MCF 10A (cell line): ENCODE measurements at regions of chr20 and their contacts with region 1.

Region 1: DNA sequence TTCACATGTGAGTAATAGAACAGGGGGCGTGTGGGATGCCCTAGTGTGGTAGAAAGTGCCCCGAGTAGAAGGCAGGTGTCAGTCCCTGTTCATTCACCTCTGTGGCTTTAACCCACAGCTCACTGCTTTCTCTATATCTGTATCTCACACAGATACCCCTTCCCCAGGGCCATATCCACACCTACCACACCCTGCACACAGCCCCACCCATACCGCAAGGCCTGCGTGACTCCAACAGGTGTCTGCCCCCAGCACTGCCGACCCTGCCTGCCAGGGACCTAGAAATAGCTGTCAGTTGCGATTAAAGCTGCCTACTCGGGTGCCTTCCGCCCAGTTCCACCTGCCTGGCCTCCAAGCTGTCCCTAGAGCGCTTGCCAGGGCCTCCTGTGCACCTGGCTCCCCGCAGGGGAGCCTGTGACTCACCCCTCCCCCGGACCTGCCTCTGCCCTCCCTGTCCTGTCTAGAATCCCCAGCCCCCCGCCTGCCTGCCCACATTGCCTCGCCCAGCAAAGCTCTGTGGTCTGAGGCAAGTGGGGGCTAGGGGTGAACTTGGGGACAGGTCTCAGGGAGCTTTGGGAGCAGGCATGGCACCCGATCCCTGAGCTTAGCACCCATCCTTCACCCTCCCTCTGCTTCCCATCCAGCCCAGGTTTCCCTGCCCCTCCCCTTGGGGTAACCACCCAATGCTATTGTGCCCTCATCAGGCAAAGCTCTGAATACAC is 38.3 kb upstream of the ID1 start:
- DNase-seq: peak; percentile 88
- H3K4me3 Mint-ChIP-seq: no peak overlapping the region
- H3K27ac Mint-ChIP-seq: peak overlapping the region; percentile 42
- H3K4me1 Mint-ChIP-seq: peaks cover 37% of the 10 kb centered on the region
- H3K27me3 Mint-ChIP-seq: no peaks in the 10 kb centered on the region
- CTCF ChIP-seq: no peak

Region 2: GRCh38 chr20:31355981-31356380 is 210.8 kb before region 1 on chr20:
- CTCF ChIA-PET with region 1: no interaction called
- POLR2A ChIA-PET with region 1: no interaction called
- intact Hi-C with region 1: no loop called
- DNase-seq: no peak
- H3K4me3 Mint-ChIP-seq: no peak overlapping the region
- H3K27ac Mint-ChIP-seq: no peak overlapping the region
- H3K4me1 Mint-ChIP-seq: no peaks in the 10 kb centered on the region
- H3K27me3 Mint-ChIP-seq: peaks cover 16% of the 10 kb centered on the region
- CTCF ChIP-seq: no peak

Region 3: GRCh38 chr20:31368301-31368700 is 198.5 kb before region 1 on chr20 and contains the start of gene DEFB118:
- CTCF ChIA-PET with region 1: no interaction called
- POLR2A ChIA-PET with region 1: no interaction called
- intact Hi-C with region 1: no loop called
- DNase-seq: no peak
- H3K4me3 Mint-ChIP-seq: no peak within 1 kb of the TSS
- H3K27ac Mint-ChIP-seq: no peak within 1 kb of the TSS
- H3K4me1 Mint-ChIP-seq: no peaks in the 10 kb centered on the region
- H3K27me3 Mint-ChIP-seq: peaks cover 33% of the 10 kb centered on the region
- CTCF ChIP-seq: no peak
- total RNA-seq, gene DEFB118: not detected in 2 replicates

Region 4: GRCh38 chr20:31578448-31579138 is 11.8 kb after region 1 on chr20:
- CTCF ChIA-PET with region 1: interaction called, 220 read pairs
- POLR2A ChIA-PET with region 1: interaction called, 20 read pairs
- intact Hi-C with region 1: no loop called
- DNase-seq: no peak
- H3K4me3 Mint-ChIP-seq: no peak overlapping the region
- H3K27ac Mint-ChIP-seq: no peak overlapping the region
- H3K4me1 Mint-ChIP-seq: peaks cover 8% of the 10 kb centered on the region
- H3K27me3 Mint-ChIP-seq: no peaks in the 10 kb centered on the region
- CTCF ChIP-seq: no peak

Region 5: GRCh38 chr20:31595654-31596411 is 29.0 kb after region 1 on chr20:
- CTCF ChIA-PET with region 1: interaction called, 1,902 read pairs
- POLR2A ChIA-PET with region 1: interaction called, 1,321 read pairs
- intact Hi-C with region 1: no loop called
- DNase-seq: peak; percentile 92
- H3K4me3 Mint-ChIP-seq: peak overlapping the region; percentile 43
- H3K27ac Mint-ChIP-seq: peak overlapping the region; percentile 94
- H3K4me1 Mint-ChIP-seq: peaks cover 28% of the 10 kb centered on the region
- H3K27me3 Mint-ChIP-seq: no peaks in the 10 kb centered on the region
- CTCF ChIP-seq: no peak

Region 6: DNA sequence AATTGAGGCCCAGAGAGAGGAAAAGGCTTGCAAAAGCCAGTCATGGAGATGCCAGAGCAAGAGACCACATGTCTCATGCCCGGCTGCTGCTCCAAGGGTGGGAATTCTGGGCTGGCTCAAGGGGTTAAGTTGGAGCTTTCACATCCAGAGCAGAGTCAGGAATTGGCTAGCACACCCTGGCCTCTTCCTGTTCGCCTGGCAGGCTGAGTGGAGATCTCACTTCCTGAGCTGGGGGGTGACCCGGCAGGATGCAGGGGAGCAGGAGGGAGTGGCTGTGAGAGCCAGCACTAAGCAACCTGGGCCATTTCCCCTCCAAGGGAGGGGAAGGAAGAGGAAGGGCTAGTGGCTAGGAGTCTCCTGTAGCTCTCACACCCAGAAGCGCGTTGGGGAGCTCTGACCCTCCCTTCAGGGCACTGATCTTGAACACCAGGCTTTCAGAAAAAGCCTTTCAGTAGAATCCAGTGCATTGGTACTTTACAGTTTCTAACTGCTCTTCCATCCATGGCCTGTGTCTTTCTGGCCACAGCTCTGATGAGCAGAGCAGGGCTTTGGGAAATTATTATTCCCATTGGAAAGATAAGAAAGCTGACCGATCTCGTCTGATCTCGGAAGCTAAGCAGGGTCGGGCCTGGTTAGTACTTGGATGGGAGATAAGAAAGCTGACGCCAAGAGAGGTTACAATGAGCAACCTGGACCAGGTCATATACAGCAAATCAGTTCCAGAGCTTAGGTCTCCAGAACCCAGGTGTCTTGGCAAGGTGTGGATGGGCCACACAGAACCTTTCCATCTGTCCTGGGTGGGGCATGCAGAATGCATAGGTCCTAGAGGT is 441.2 kb after region 1 on chr20:
- CTCF ChIA-PET with region 1: no interaction called
- POLR2A ChIA-PET with region 1: no interaction called
- intact Hi-C with region 1: no loop called
- DNase-seq: no peak
- H3K4me3 Mint-ChIP-seq: no peak overlapping the region
- H3K27ac Mint-ChIP-seq: no peak overlapping the region
- H3K4me1 Mint-ChIP-seq: no peaks in the 10 kb centered on the region
- H3K27me3 Mint-ChIP-seq: peaks cover 31% of the 10 kb centered on the region
- CTCF ChIP-seq: no peak